Motor neuron (in vitro differentiated cells): ENCODE measurements at regions of chr11 and their contacts with region 1.

Region 1: GRCh38 chr11:36249246-36249645 is 40.0 kb downstream of the COMMD9 start:
- ATAC-seq: peak in 4 of 8 experiments; percentile 9 to 86 (median 74)
- H3K4me3 ChIP-seq: no peak overlapping the region
- H3K27ac ChIP-seq: no peak overlapping the region
- H3K4me1 ChIP-seq: peaks cover 21 to 30% of the 10 kb centered on the region in 2 donors

Region 2: DNA sequence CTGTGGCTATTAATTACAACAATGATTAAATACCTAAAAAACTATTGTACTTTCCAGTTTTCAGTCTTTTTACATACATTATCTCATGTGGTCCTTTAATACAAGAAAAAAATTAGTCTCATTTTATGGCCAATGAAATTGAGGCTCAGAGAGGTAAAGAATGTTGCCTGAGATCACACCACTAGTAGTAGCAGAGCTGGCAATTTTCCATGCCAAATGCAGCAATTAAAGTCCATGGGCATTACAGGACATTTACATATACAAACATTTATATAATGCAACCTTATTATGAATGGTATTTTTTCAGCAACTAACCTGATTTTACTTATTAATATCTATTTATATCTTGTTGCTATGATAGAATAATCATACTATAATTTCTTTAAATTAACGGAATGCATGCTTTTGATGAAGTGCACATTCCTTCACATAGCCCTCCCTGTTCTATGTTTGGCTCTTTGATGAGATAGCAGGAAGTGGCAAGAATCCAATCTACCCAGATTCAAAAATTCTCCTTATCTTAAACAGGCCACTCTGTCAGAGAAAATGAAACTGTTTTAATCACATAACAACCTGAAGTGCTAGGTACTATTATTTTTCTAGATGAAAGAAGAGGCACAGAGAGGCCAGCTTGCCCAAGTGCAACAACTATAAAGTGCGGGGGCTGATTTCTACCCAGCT is 426.3 kb before region 1 on chr11:
- in situ Hi-C with region 1: loop called in 4 of 9 experiments (anchors 10 to 25 kb)
- ATAC-seq: no peak
- H3K4me3 ChIP-seq: no peak overlapping the region
- H3K27ac ChIP-seq: no peak overlapping the region
- H3K4me1 ChIP-seq: peaks cover 2 to 3% of the 10 kb centered on the region in 2 donors